ENCODE measurements at regions of chr19 and their contacts with region 1.

Region 1: GRCh38 chr19:9584073-9584833 is at the start of gene ZNF121:
- H3K4me3 Mint-ChIP-seq: peak within 1 kb of the TSS; percentile 93
- H3K27ac Mint-ChIP-seq: peak within 1 kb of the TSS; percentile 98
- H3K4me1 Mint-ChIP-seq: peaks cover 18% of the 10 kb centered on the region
- H3K27me3 Mint-ChIP-seq: peaks cover 11% of the 10 kb centered on the region

Region 2: GRCh38 chr19:9205501-9206113 is 378.6 kb before region 1 on chr19:
- intact Hi-C with region 1: loop called (anchors 10 kb)
- H3K4me3 Mint-ChIP-seq: peak overlapping the region; percentile 46
- H3K27ac Mint-ChIP-seq: peak overlapping the region; percentile 22
- H3K4me1 Mint-ChIP-seq: peaks cover 18% of the 10 kb centered on the region
- H3K27me3 Mint-ChIP-seq: peaks cover 33% of the 10 kb centered on the region

Region 3: GRCh38 chr19:9309139-9309973 is 274.9 kb before region 1 on chr19 and contains the start of gene ZNF699:
- intact Hi-C with region 1: loop called (anchors 10 kb)
- H3K4me3 Mint-ChIP-seq: peak within 1 kb of the TSS; percentile 92
- H3K27ac Mint-ChIP-seq: peak within 1 kb of the TSS; percentile 98
- H3K4me1 Mint-ChIP-seq: peaks cover 22% of the 10 kb centered on the region
- H3K27me3 Mint-ChIP-seq: peaks cover 2% of the 10 kb centered on the region

Region 4: GRCh38 chr19:9435279-9436268 is 148.7 kb before region 1 on chr19 and contains the start of gene ZNF266:
- intact Hi-C with region 1: loop called (anchors 10 kb)
- H3K4me3 Mint-ChIP-seq: peak within 1 kb of the TSS; percentile 88
- H3K27ac Mint-ChIP-seq: peak within 1 kb of the TSS; percentile 91
- H3K4me1 Mint-ChIP-seq: peaks cover 28% of the 10 kb centered on the region
- H3K27me3 Mint-ChIP-seq: no peaks in the 10 kb centered on the region

Region 5: GRCh38 chr19:9461938-9462337 is 122.3 kb before region 1 on chr19:
- intact Hi-C with region 1: no loop called
- H3K4me3 Mint-ChIP-seq: no peak overlapping the region
- H3K27ac Mint-ChIP-seq: no peak overlapping the region
- H3K4me1 Mint-ChIP-seq: no peaks in the 10 kb centered on the region
- H3K27me3 Mint-ChIP-seq: no peaks in the 10 kb centered on the region

Region 6: DNA sequence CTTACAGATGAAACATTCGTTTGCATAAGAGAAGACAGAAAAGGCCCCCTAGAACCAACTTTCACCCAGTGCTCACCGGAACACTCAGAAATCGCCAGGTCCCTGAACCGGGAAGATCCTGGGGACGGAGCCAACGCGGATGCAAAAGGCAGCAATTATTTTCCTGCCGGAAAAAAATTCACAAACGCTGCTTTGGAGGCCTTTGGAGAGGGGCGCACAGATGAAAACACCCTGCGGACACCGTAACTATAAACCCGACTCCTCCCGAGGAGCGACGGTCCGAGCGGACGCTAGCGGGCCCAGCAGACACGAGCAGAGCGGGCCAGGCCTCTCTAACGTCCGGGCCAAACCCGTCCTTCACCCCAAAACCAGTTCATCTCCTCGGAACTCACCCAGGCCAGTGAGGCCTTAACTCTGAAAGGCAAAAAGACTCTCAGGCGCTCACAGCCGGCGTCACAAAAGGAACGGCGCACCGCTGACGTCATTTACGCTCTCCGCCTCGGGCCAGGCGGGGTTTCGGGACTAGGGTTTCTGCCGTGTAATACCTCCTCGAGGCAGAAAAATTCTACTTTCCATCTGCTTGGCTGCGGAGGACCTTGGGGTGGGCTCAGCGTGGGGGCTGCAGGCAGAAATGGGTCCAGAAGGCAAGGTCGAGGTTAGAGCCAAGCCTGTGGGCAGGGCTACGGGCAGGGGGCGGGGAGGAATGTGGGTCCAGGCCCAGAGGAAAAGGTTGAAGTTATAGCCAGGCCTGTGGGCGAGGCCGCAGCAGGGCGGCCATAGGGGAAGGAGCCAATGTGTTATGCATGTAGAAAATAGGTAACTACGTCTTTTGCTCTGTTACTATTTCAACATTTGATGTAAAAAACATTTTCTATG is 45.8 kb before region 1 on chr19 and contains the start of gene ZNF426:
- intact Hi-C with region 1: loop called (anchors 5 kb)
- H3K4me3 Mint-ChIP-seq: peak within 1 kb of the TSS; percentile 93
- H3K27ac Mint-ChIP-seq: peak within 1 kb of the TSS; percentile 99
- H3K4me1 Mint-ChIP-seq: no peaks in the 10 kb centered on the region
- H3K27me3 Mint-ChIP-seq: no peaks in the 10 kb centered on the region

Region 7: DNA sequence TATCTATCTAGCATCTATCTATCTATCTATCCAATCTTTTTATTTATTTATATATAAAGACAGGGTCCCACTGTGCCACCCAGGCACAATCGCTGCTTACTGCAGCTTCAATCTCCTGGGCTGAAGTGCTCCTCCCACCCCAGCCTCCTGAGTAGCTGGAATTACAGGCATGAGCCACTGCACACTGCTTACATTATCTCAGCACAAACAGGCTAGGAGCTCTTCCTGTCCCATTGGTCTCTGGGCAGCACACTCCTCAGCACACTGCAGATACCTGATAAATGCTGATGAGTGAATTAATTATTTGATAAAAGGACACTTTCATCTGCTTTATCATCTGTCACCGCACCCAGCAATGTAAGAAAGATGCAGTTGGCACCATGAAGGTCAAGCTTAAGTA is 74.5 kb after region 1 on chr19:
- intact Hi-C with region 1: no loop called
- H3K4me3 Mint-ChIP-seq: no peak overlapping the region
- H3K27ac Mint-ChIP-seq: no peak overlapping the region
- H3K4me1 Mint-ChIP-seq: peaks cover 7% of the 10 kb centered on the region
- H3K27me3 Mint-ChIP-seq: no peaks in the 10 kb centered on the region